Heart right ventricle (tissue), 16 donors: ENCODE measurements at regions of chr13 and their contacts with region 1.

Region 1: DNA sequence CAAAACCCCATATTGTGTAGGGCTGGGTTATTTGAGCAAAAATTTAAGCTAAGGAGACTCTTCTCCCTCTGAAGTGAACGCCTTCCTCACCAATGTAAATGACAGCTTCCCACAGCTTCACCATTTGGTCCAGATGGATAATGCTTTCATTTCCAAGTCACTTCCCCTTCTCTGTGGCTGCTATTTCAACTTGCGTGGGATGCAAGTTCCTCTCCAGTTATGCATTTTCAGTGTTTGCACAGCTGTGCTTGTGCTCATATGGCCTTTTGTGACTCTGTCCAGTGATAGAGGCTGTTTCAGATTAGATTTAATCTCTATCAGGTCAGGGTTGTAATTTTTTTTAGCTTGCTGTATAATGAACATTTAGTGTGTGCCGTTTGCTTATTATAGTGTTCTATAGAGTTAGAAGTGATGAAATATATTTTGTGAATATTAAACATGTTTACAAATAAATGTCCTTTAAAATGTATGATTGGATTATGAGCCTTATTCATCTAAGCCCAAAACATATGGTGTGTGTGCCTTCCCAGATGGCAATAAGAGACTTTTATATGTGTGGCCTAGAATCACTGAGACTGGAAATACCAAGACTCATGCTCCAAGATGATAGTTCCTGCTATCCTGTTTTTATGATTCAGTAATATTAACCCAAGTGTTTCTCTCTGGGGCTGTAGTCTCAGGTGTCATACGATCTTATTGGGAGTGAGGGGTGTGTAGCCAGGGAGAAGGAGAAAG is 86.6 kb downstream of the TNFRSF19 start:
- DNase-seq: peak in 1 of 2 donors; percentile 77
- ATAC-seq: peak in 7 of 8 donors; percentile 65 to 87 (median 80)
- H3K4me3 ChIP-seq: no peak overlapping the region
- H3K27ac ChIP-seq: peak overlapping the region in 8 of 10 donors; percentile 34 to 73 (median 64)
- H3K4me1 ChIP-seq: peaks cover 0 to 76% (median 58%) of the 10 kb centered on the region in 9 donors
- H3K27me3 ChIP-seq: no peaks in the 10 kb centered on the region
- CTCF ChIP-seq: no peak

Region 2: DNA sequence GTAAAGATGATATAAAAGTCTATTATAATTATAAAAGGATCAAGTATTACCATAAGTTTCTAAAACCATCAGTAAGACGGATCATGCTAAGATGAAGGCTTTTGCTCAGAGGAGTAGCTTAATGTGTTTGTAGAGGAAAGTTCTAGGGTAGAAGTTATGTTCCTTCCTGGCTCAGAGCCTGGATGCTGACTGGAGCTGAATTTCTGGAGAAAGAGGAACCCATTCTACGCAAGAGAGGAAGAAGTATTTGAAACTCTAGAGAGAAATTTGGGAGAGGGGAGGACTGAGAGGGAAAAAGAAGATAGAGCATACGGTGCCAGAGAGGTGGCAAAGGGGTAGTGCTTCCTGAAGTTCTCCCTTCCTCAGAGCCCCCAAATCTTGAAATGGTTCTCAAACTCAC is 527.5 kb before region 1 on chr13:
- intact Hi-C with region 1: no loop called
- DNase-seq: no peak
- ATAC-seq: no peak
- H3K4me3 ChIP-seq: no peak overlapping the region
- H3K27ac ChIP-seq: no peak overlapping the region
- H3K4me1 ChIP-seq: no peaks in the 10 kb centered on the region
- H3K27me3 ChIP-seq: peaks cover 0 to 6% (median 0%) of the 10 kb centered on the region in 7 donors
- CTCF ChIP-seq: no peak

Region 3: GRCh38 chr13:23348262-23349127 is 308.3 kb before region 1 on chr13:
- intact Hi-C with region 1: no loop called
- DNase-seq: no peak
- ATAC-seq: peak in 4 of 8 donors; percentile 59 to 75 (median 67)
- H3K4me3 ChIP-seq: no peak overlapping the region
- H3K27ac ChIP-seq: peak overlapping the region in 1 of 10 donors; percentile 20
- H3K4me1 ChIP-seq: peaks cover 0 to 18% (median 12%) of the 10 kb centered on the region in 9 donors
- H3K27me3 ChIP-seq: no peaks in the 10 kb centered on the region
- CTCF ChIP-seq: peak in 3 of 9 donors; percentile 10 to 42 (median 20)

Region 4: GRCh38 chr13:23609874-23610576 is 46.8 kb before region 1 on chr13:
- intact Hi-C with region 1: loop called in 1 of 10 experiments (anchors 5 kb)
- DNase-seq: peak; percentile 34 to 49
- ATAC-seq: peak; percentile 22 to 68 (median 52)
- H3K4me3 ChIP-seq: peak overlapping the region in 6 of 10 donors; percentile 6 to 26 (median 18)
- H3K27ac ChIP-seq: peak overlapping the region; percentile 0 to 85 (median 55)
- H3K4me1 ChIP-seq: peaks cover 0 to 46% (median 40%) of the 10 kb centered on the region in 9 donors
- H3K27me3 ChIP-seq: no peaks in the 10 kb centered on the region
- CTCF ChIP-seq: no peak